ENCODE measurements at regions of chr19 and their contacts with region 1.

Region 1: GRCh38 chr19:42132851-42133528 is 744 bp upstream of the POU2F2 start:
- DNase-seq: peak; percentile 88
- H3K4me3 Mint-ChIP-seq: peak overlapping the region; percentile 81
- H3K27ac Mint-ChIP-seq: peak overlapping the region; percentile 85
- H3K4me1 Mint-ChIP-seq: peaks cover 49% of the 10 kb centered on the region
- H3K27me3 Mint-ChIP-seq: no peaks in the 10 kb centered on the region

Region 2: GRCh38 chr19:42028304-42029216 is 104.4 kb before region 1 on chr19:
- CTCF ChIA-PET with region 1: no interaction called
- POLR2A ChIA-PET with region 1: no interaction called
- intact Hi-C with region 1: no loop called
- DNase-seq: peak; percentile 64
- H3K4me3 Mint-ChIP-seq: no peak overlapping the region
- H3K27ac Mint-ChIP-seq: no peak overlapping the region
- H3K4me1 Mint-ChIP-seq: no peaks in the 10 kb centered on the region
- H3K27me3 Mint-ChIP-seq: peaks cover 11% of the 10 kb centered on the region

Region 3: GRCh38 chr19:42075616-42076379 is 57.2 kb before region 1 on chr19 and contains the start of gene ZNF574:
- CTCF ChIA-PET with region 1: interaction called, 3 read pairs
- POLR2A ChIA-PET with region 1: no interaction called
- intact Hi-C with region 1: loop called (anchors 2 kb)
- DNase-seq: peak; percentile 99
- H3K4me3 Mint-ChIP-seq: peak within 1 kb of the TSS; percentile 99
- H3K27ac Mint-ChIP-seq: peak within 1 kb of the TSS; percentile 99
- H3K4me1 Mint-ChIP-seq: peaks cover 35% of the 10 kb centered on the region
- H3K27me3 Mint-ChIP-seq: no peaks in the 10 kb centered on the region
- total RNA-seq, gene ZNF574: 12.2 to 13.2 TPM

Region 4: DNA sequence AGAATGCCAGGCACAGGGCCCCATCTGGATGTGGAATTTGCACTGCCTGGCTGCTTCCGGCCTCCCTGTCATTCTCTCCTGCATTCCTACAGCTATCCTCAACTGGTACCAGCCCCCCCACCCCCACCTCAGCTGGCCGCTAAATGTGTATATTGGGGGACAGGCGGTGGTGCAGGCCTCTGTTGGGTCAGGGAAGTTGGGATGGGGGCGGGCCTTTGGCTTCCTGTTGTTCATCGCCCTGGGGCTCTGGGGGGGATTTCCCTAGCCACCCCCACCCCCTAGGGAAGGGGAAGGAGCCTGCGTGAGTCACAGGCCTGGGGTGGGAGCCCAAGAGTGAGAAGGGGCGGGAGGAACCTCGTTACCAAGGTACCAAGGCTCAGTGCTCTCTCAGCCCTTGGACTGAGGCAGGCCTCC is 11.3 kb before region 1 on chr19:
- CTCF ChIA-PET with region 1: interaction called, 31 read pairs
- POLR2A ChIA-PET with region 1: interaction called, 23 read pairs
- intact Hi-C with region 1: loop called (anchors 1 kb)
- DNase-seq: peak; percentile 94
- H3K4me3 Mint-ChIP-seq: peak overlapping the region; percentile 82
- H3K27ac Mint-ChIP-seq: peak overlapping the region; percentile 97
- H3K4me1 Mint-ChIP-seq: peaks cover 60% of the 10 kb centered on the region
- H3K27me3 Mint-ChIP-seq: no peaks in the 10 kb centered on the region

Region 5: DNA sequence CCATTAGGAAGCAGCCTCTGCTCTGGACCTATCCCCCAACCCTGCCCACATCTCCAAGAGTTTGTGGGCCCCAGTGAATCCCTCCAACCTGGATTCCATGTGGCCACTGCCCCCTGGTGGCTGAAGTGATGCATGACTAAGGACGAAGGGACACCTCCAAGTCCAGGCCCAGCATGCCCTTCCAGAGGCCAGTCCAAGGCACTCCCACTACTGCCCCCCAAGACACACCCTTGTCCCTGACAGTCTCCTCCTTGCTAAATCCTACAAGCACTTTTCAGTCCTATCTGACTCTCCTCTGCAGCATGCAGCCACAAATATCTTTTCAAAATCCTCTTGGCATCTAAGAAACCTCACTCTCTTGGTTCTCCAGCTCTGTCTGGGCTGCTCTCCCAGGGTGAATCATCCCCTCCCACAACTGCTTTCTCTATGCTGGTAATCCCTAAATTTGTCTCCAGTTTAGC is 51.4 kb after region 1 on chr19:
- CTCF ChIA-PET with region 1: interaction called, 41 read pairs
- POLR2A ChIA-PET with region 1: no interaction called
- intact Hi-C with region 1: loop called (anchors 1 kb)
- DNase-seq: peak; percentile 83
- H3K4me3 Mint-ChIP-seq: no peak overlapping the region
- H3K27ac Mint-ChIP-seq: peak overlapping the region; percentile 19
- H3K4me1 Mint-ChIP-seq: peaks cover 37% of the 10 kb centered on the region
- H3K27me3 Mint-ChIP-seq: no peaks in the 10 kb centered on the region

Region 6: DNA sequence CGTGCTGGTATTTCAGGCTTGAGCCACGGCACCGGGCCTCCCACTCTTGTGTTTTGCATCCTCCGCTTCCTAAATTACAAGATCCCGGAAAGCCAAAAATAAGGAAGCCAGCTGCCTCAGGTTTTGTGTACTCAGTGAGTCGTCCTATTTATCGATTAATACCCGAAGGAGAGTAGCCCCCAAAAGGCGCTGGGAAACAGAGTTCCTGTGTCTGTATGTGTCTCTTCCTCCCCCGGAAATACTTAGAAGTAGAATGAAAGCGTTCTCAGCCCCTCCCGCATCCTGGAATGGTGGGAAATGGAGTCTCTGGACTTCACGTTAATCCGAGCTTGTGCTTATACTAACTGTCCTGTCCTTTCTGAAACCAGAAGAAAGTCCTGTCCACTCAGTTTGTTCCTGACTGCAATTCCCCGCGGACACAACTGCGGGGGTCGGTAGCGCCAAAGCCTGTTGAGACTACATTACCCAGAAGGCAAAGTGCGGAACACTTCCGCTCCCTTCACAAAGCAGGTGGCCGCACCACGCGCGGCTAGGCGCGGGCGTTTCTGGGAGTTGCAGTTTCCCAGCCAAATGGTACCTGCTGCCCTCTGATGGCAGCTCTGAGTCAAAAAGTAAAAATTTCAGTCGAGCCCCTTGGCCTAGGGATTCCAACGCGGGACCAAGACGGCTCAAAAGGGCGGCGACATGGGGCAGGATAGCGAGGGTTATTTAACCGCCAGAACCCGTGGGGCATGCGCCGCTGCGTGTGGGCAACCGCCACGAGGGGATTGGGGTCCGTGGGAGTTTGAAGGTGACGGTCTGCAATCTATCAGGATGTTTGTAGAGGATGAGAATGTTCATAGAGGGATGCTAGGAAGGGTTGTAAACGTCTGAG is 111.6 kb after region 1 on chr19:
- CTCF ChIA-PET with region 1: interaction called, 9 read pairs
- POLR2A ChIA-PET with region 1: interaction called, 5 read pairs
- intact Hi-C with region 1: loop called (anchors 1 kb)
- DNase-seq: peak; percentile 96
- H3K4me3 Mint-ChIP-seq: peak overlapping the region; percentile 92
- H3K27ac Mint-ChIP-seq: peak overlapping the region; percentile 94
- H3K4me1 Mint-ChIP-seq: peaks cover 42% of the 10 kb centered on the region
- H3K27me3 Mint-ChIP-seq: no peaks in the 10 kb centered on the region

Region 7: DNA sequence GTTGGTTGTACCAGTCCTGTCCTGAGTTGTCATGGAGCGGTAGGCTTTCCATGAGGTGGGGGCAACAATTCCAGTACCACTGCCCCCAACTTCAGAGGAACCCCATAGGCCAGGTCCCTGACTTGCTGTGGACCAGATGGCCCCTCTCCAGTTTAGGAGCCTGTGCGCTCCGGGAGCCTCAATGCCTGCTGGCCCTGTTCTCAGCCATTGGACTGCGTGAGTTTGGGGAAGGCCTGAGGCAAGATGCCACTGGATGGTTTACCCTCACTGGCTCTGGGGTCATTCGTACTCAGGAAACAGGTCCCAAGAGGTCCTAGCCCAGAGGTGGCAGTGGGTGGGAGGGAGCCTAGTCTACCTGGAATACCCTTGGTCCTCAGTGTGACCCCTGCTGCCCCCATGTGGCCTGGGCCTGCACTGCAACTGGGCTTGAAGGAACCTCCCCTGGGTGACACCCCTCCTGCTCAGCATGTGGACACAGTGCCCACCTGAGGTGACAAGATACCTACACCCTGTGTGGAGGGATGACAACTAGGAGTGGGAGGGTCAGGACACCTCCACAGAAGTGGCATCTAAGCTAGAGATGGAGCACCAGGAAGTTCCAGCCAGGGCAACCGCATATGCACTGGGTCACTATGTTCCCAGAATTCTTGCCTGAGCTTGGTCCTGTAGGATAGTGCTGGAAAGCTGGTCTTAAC is 163.0 kb after region 1 on chr19:
- CTCF ChIA-PET with region 1: interaction called, 10 read pairs
- POLR2A ChIA-PET with region 1: no interaction called
- intact Hi-C with region 1: loop called (anchors 1 kb)
- DNase-seq: peak; percentile 92
- H3K4me3 Mint-ChIP-seq: no peak overlapping the region
- H3K27ac Mint-ChIP-seq: peak overlapping the region; percentile 28
- H3K4me1 Mint-ChIP-seq: peaks cover 9% of the 10 kb centered on the region
- H3K27me3 Mint-ChIP-seq: no peaks in the 10 kb centered on the region

Region 8: GRCh38 chr19:42423462-42424344 is 290.7 kb after region 1 on chr19:
- CTCF ChIA-PET with region 1: interaction called, 5 read pairs
- POLR2A ChIA-PET with region 1: no interaction called
- intact Hi-C with region 1: loop called (anchors 5 kb)
- DNase-seq: peak; percentile 97
- H3K4me3 Mint-ChIP-seq: peak overlapping the region; percentile 92
- H3K27ac Mint-ChIP-seq: peak overlapping the region; percentile 87
- H3K4me1 Mint-ChIP-seq: peaks cover 37% of the 10 kb centered on the region
- H3K27me3 Mint-ChIP-seq: no peaks in the 10 kb centered on the region